ENCODE measurements at regions of chr3 and their contacts with region 1.

Region 1: DNA sequence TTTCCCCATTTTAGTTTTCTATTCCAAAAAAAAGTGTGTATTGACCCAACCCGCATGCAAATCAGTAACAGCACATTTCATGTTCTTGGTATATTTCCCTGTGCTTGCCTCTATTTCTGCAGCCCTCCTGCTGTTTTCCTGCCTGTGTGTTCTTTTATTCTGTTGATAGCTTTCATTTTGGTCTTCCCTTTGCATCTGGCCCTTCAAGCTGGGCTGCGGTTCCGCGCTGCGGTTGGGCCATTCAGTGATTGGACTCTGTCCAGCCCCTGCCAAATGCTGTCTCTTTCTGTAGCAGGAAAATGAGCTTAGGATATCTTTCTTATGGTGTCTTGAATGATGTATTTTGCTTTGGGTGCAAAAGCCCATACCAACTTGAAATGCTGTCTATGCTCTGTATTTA is 49.9 kb downstream of the ZNF621 start:
- DNase-seq: no peak
- ATAC-seq: no peak

Region 2: DNA sequence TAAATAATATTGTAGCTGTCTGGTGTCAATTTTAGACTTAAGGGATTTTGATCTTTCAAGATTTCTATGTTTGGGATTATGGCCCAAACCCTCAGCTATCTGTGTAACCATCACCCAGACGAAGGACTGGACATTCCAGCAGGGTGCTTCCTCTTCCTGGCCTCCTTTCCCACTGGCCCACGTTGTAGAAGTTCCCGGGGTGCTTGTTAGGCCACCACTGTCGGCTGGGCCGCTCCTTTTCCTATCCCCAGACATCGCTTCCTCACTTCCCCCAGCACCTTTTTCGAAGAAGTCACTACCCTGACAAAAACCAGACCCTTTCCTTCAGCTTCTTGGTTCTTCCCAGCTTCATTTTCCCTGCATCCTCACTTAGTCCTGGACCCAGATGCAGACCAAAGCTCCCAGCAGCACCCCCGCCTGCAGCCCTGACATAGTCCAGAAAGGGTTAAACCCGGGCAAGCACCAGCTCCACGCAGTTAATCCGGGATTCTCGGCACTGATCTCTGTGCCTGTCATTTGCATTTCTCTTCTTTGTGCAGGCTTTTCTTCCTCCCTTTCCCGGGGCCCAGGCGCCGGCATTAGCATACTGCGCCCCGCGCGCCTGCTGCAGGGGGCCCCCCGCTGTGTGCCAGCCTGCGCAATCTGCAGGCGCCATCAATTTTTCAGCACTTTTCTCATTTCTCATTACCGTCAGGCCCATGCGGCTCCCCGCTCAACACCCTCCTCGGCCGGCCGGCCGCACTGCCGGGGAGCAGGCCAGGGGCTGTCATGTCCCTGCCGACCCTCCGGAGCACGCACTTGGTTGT is 40.7 kb after region 1 on chr3:
- intact Hi-C with region 1: no loop called
- DNase-seq: no peak
- ATAC-seq: peak; percentile 20

Region 3: DNA sequence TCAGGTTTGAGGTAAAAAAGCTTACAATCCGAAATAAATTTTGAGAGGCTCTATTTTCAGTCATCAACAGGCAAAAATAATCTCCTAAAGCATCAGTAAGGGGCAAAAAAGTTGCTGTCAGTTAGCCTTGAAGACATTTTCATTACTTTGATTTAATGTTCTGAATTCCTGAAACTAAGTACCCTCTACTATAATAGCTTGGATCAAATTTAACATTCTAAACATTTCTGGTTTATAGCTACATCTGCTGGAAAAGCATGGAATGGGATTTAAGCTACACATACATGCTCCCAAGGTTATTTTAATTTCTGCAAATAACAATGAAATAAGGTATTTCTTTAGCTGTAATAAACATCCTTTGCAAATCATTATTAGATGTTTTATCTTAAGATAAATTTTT is 1141.8 kb after region 1 on chr3:
- intact Hi-C with region 1: loop called (anchors 10 kb)
- DNase-seq: no peak
- ATAC-seq: no peak

Measured in Right ventricle myocardium superior (tissue), 1 donor.